GM10248 (cell line): ENCODE measurements at regions of chr15 and their contacts with region 1.

Region 1: GRCh38 chr15:45573961-45574629 is 13.1 kb upstream of the BLOC1S6 start:
- DNase-seq: no peak
- CTCF ChIP-seq: no peak

Region 2: GRCh38 chr15:45287390-45287956 is 286.6 kb before region 1 on chr15:
- CTCF ChIA-PET with region 1: no interaction called
- POLR2A ChIA-PET with region 1: no interaction called
- DNase-seq: no peak
- CTCF ChIP-seq: no peak

Region 3: GRCh38 chr15:45587095-45587860 is 13.2 kb after region 1 on chr15 and contains the start of gene BLOC1S6:
- CTCF ChIA-PET with region 1: interaction called, 10 read pairs
- POLR2A ChIA-PET with region 1: no interaction called
- DNase-seq: peak; percentile 84
- CTCF ChIP-seq: no peak